ENCODE measurements at regions of chr5 and their contacts with region 1.

Region 1: GRCh38 chr5:139422307-139422893 is 16.9 kb downstream of the DNAJC18 start:
- DNase-seq: no peak
- ATAC-seq: peak; percentile 99
- H3K4me3 Mint-ChIP-seq: no peak overlapping the region
- H3K27ac Mint-ChIP-seq: no peak overlapping the region
- H3K4me1 Mint-ChIP-seq: peaks cover 5% of the 10 kb centered on the region
- H3K27me3 Mint-ChIP-seq: no peaks in the 10 kb centered on the region
- CTCF ChIP-seq: no peak

Region 2: GRCh38 chr5:138869763-138870500 is 552.5 kb before region 1 on chr5:
- CTCF ChIA-PET with region 1: no interaction called
- POLR2A ChIA-PET with region 1: no interaction called
- intact Hi-C with region 1: no loop called
- DNase-seq: no peak
- ATAC-seq: no peak
- H3K4me3 Mint-ChIP-seq: no peak overlapping the region
- H3K27ac Mint-ChIP-seq: no peak overlapping the region
- H3K4me1 Mint-ChIP-seq: no peaks in the 10 kb centered on the region
- H3K27me3 Mint-ChIP-seq: peaks cover 1% of the 10 kb centered on the region
- CTCF ChIP-seq: no peak

Region 3: DNA sequence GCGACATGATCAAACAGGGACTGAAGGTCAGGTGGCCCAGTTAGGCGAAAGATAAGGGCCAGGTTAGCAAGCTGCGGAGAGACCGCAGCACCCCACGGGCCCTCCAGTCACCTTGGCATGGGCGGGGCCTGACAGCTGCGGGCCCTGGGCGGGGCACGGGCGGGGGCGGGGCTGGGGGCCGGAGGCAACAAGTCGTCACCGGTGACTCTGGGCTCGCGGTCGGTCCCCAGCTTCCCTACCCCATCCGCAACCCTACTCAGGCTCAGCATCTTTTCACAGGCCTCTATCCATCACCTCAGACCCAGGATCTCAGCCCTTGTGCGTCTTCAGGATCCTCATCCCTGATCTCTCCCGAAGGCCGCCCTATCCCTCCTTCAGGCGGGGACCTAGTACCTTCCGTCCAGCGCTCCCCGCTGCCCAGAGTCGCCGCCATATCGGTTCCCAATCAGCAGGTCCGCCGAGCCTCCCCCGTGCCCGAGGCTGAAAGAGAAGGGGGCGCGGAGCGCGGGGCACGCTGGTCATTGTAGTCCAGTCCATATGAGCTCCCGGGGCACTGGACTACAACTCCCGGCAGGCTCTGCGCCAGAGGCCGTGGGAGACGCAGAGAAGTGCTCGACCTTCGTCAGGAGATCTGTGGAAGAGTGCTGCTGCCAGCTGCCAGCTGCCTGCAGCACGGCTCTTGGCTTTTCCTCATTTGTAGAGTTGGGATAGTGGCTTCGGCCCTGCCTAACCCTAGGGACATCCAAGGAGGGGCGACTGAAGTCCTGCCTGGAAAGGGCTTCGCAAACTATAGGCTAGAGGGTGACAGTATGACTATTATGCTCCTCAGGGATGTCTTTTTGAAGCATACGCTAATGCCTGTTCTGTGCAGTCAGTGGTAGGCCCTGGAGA is 16.9 kb after region 1 on chr5 and contains the start of gene DNAJC18:
- CTCF ChIA-PET with region 1: interaction called, 16 read pairs
- POLR2A ChIA-PET with region 1: interaction called, 4 read pairs
- intact Hi-C with region 1: no loop called
- DNase-seq: peak; percentile 87
- ATAC-seq: peak; percentile 95
- H3K4me3 Mint-ChIP-seq: peak within 1 kb of the TSS; percentile 99
- H3K27ac Mint-ChIP-seq: peak within 1 kb of the TSS; percentile 99
- H3K4me1 Mint-ChIP-seq: peaks cover 12% of the 10 kb centered on the region
- H3K27me3 Mint-ChIP-seq: no peaks in the 10 kb centered on the region
- CTCF ChIP-seq: no peak
- total RNA-seq, gene DNAJC18: 9.1 and 9.6 TPM in 2 replicates

Region 4: DNA sequence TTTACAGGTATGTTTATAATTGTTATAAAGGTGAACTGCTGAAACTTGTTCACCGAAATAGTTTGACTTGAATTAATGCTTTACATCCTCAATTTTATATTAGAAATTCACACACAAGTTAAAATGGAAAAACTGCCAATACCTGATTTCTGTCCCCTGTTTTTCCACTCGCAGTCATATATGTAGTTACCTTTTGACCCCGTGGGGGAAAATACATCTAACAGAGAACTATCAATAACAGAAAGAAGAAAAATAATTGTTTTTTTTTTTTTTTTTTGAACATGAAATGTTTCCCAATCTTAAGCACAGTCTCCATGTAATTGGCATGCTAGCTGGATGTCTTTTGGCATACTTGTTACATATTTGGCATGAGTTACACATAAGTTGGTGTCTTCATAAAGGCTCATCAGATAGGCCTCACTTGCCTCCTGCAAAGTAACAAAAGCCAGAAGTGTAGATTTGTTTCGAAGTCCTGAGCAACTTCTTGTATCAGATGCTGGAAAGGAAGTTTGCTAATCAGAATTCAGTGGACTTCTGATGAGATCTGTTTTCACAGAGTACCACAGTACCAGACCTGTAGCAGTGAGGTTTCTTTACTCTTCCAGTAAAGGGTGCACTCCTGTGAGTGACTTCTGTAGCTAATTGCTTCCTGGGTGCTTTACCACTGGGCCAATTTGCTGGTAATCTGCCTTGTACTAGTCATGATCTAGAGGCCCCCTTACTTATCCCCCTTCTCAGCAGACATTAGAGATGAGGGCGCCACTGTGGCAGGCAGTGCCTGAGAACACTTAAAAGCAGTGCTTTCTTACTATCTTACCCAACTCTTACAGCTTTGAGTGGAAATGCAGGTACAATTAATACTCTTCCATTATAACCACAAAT is 189.5 kb after region 1 on chr5:
- CTCF ChIA-PET with region 1: interaction called, 3 read pairs
- POLR2A ChIA-PET with region 1: no interaction called
- intact Hi-C with region 1: loop called (anchors 5 kb)
- DNase-seq: no peak
- ATAC-seq: no peak
- H3K4me3 Mint-ChIP-seq: no peak overlapping the region
- H3K27ac Mint-ChIP-seq: peak overlapping the region; percentile 59
- H3K4me1 Mint-ChIP-seq: peaks cover 37% of the 10 kb centered on the region
- H3K27me3 Mint-ChIP-seq: no peaks in the 10 kb centered on the region
- CTCF ChIP-seq: no peak

Region 5: DNA sequence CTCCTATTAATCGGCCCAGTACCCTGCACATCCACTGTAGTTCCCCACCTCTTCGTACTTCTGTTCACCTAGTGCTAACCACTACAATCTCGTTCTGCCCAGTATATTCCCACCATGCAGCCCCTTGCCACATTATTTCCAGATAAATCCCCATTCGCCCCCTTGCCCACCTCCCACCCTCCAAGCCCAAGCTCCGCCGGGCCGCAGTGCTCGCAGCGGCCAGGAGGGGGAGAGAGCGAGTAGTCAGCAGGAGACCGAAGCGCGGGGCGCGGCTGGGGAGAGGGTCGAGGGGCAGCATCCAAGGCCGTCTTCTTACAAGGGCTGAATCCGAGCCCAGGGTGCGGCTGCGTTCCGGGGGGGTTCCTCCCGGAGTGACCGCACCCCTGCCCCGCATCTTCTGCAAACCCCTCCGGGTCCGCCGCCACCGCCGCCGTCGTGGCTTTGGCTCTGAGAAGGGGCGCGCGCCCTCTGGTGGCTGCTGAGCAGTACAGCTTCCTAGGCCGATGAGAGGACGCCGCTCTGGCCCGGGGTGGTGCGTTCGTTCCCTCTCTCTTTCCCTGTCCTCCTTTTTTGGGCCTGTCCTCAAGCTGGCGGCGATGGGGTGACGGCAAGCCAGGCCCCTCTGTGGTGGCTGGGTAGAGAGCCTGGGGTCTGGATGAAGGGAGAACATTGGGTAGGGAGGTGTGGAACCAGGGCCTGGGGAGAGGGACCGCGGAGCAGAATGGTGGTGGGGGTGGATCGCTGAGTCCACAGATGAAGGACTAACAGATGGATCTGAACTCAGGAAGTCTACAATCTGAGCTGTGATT is 343.2 kb after region 1 on chr5:
- CTCF ChIA-PET with region 1: interaction called, 10 read pairs
- POLR2A ChIA-PET with region 1: no interaction called
- intact Hi-C with region 1: loop called (anchors 1 kb)
- DNase-seq: peak; percentile 87
- ATAC-seq: peak; percentile 86
- H3K4me3 Mint-ChIP-seq: peak overlapping the region; percentile 74
- H3K27ac Mint-ChIP-seq: peak overlapping the region; percentile 56
- H3K4me1 Mint-ChIP-seq: peaks cover 25% of the 10 kb centered on the region
- H3K27me3 Mint-ChIP-seq: peaks cover 9% of the 10 kb centered on the region
- CTCF ChIP-seq: peak; percentile 98

Region 6: GRCh38 chr5:139863855-139864558 is 441.6 kb after region 1 on chr5:
- CTCF ChIA-PET with region 1: interaction called, 7 read pairs
- POLR2A ChIA-PET with region 1: no interaction called
- intact Hi-C with region 1: loop called (anchors 1 kb)
- DNase-seq: peak; percentile 45
- ATAC-seq: peak; percentile 90
- H3K4me3 Mint-ChIP-seq: no peak overlapping the region
- H3K27ac Mint-ChIP-seq: no peak overlapping the region
- H3K4me1 Mint-ChIP-seq: peaks cover 5% of the 10 kb centered on the region
- H3K27me3 Mint-ChIP-seq: peaks cover 20% of the 10 kb centered on the region
- CTCF ChIP-seq: peak; percentile 64